ENCODE measurements at regions of chr6 and their contacts with region 1.

Region 1: GRCh38 chr6:41509580-41509979 is 36.6 kb upstream of the FOXP4 start:
- DNase-seq: no peak
- H3K4me3 ChIP-seq: no peak overlapping the region
- H3K27ac ChIP-seq: no peak overlapping the region
- H3K4me1 ChIP-seq: peaks cover 0 to 11% (median 4%) of the 10 kb centered on the region in 4 experiments; a peak in 6 of 7 replicates
- H3K27me3 ChIP-seq: peaks cover 25 to 76% (median 55%) of the 10 kb centered on the region in 4 experiments
- CTCF ChIP-seq: no peak
- EP300 ChIP-seq: no peak
- POLR2A ChIP-seq: no peak
- RAD21 ChIP-seq: no peak

Region 2: DNA sequence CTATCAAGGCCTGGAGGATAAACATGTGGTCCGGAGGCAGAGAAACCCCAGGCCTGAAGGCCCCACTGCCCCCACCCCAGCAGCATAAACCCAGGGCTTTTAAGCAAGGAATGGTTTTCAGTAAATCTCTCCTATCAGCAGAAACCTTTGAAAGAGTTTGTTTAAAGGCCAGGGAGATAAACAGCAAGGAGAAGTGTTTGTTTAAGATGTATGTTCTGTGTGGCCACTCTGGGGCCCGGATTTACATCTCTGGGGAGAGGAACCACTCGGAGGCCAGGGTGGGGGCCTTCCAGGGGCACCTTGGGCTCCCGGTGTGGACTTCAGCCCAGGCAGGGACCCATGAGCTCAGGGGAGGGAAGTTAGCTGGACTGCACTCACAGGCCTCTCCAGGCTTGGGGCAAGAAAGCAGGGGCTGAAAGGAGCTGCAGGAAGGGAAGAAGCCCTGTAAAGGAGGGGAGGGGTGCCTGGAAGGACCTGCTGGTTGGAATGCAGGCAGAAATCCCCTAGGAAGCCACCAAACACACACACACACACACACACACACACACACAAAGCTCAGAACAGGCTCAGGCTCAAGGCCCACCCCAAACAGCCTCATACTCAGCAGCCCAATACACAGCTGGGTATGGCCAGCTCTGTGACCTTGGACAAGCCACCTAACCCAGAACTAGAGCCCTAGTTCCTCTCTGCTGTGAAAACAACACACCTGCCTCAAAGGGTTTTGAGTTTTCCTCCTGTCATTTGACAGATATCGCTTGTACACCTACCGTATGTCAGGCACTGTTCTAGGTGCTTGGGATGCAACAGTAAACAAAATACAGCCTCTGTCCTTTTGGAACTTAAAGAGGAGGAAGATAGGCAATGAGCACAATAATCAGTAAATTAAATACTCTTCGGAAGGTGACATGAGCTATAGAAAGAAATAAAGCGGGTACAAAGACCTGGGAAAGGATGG is 10.4 kb after region 1 on chr6:
- CTCF ChIA-PET with region 1: interaction called, 11 read pairs
- POLR2A ChIA-PET with region 1: no interaction called
- DNase-seq: no peak
- H3K4me3 ChIP-seq: no peak overlapping the region
- H3K27ac ChIP-seq: no peak overlapping the region
- H3K4me1 ChIP-seq: peaks cover 0 to 9% (median 2%) of the 10 kb centered on the region in 4 experiments; a peak in 3 of 7 replicates
- H3K27me3 ChIP-seq: peaks cover 0 to 7% (median 0%) of the 10 kb centered on the region in 4 experiments; a peak in 2 of 7 replicates
- CTCF ChIP-seq: no peak
- EP300 ChIP-seq: no peak
- POLR2A ChIP-seq: no peak
- RAD21 ChIP-seq: no peak

Measured in H1 (cell line).